ENCODE measurements at regions of chr11 and their contacts with region 1.

Region 1: GRCh38 chr11:26841818-26842473 is 120.1 kb upstream of the SLC5A12 start:
- DNase-seq: no peak
- H3K4me3 ChIP-seq: no peak overlapping the region
- H3K27ac ChIP-seq: peak overlapping the region; percentile 72 to 78 (median 77)
- H3K4me1 ChIP-seq: peaks cover under 1 to 57% (median 46%) of the 10 kb centered on the region in 4 donors
- H3K27me3 ChIP-seq: no peaks in the 10 kb centered on the region
- CTCF ChIP-seq: no peak
- EP300 ChIP-seq: peak; percentile 12
- POLR2A ChIP-seq: no peak

Region 2: GRCh38 chr11:26993965-26994457 is 152.1 kb after region 1 on chr11 and contains the start of gene FIBIN:
- intact Hi-C with region 1: loop called (anchors 5 kb)
- DNase-seq: no peak
- H3K4me3 ChIP-seq: peak within 1 kb of the TSS; percentile 66 to 88 (median 71)
- H3K27ac ChIP-seq: peak within 1 kb of the TSS; percentile 83 to 92 (median 87)
- H3K4me1 ChIP-seq: peaks cover 0 to 55% (median 32%) of the 10 kb centered on the region in 4 donors
- H3K27me3 ChIP-seq: no peaks in the 10 kb centered on the region
- CTCF ChIP-seq: peak in 1 of 3 experiments; percentile 3
- EP300 ChIP-seq: no peak
- POLR2A ChIP-seq: no peak
- total RNA-seq, gene FIBIN: 76.4 to 151 (median 101) TPM

Region 3: DNA sequence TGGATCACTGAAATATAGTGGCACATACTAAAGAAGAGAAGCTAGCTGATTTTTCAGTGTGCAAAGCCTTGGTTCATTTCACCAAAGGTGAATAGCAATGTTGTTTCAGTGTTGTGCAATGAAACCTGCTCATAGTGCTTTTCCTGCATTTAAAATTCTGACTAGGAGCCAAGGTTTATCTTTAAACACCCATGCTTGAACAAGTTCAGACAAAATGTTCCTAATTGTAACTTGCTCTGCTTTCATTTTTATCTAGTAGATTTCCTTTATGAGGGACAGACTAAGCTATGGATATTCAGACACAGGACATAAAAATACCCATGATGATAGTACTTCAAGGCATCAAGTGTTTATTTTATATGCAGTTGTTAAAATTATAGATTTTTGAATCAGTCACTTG is 246.4 kb after region 1 on chr11:
- intact Hi-C with region 1: no loop called
- DNase-seq: no peak
- H3K4me3 ChIP-seq: no peak overlapping the region
- H3K27ac ChIP-seq: peak overlapping the region in 1 of 4 donors; percentile 14
- H3K4me1 ChIP-seq: peaks cover 0 to 24% (median 14%) of the 10 kb centered on the region in 4 donors
- H3K27me3 ChIP-seq: no peaks in the 10 kb centered on the region
- CTCF ChIP-seq: no peak
- EP300 ChIP-seq: no peak
- POLR2A ChIP-seq: no peak